HCT116 (cell line): ENCODE measurements at regions of chr9 and their contacts with region 1.

Region 1: DNA sequence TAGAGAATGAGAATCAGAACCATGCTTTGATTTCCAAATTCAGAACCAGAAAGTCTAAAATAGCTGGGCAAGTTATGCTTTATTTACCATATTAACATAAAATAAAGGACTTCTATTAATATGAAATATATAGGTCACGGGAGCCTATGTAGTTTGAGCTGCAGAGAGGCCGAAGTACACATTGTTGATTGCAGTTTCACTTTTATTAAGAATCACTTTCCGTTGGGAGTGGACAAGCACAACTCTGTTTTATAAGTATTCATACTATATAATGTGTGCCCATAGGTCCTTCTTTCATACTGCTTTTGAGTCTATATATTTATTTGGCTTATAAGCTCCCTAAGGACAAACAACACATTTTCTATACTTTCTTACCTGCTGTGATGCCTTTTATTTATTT is 58.7 kb upstream of the DMRT3 start:
- DNase-seq: no peak
- ATAC-seq: no peak
- H3K4me3 ChIP-seq: no peak overlapping the region
- H3K27ac ChIP-seq: no peak overlapping the region
- H3K4me1 ChIP-seq: no peaks in the 10 kb centered on the region
- H3K27me3 ChIP-seq: peaks cover 4% of the 10 kb centered on the region; the same call in 1 of the 2 replicates
- CTCF ChIP-seq: no peak
- POLR2A ChIP-seq: no peak
- RAD21 ChIP-seq: no peak

Region 2: GRCh38 chr9:928362-929042 is 10.8 kb after region 1 on chr9:
- CTCF ChIA-PET with region 1: interaction called, 15 read pairs
- POLR2A ChIA-PET with region 1: no interaction called
- RAD21 ChIA-PET with region 1: no interaction called
- intact Hi-C with region 1: no loop called
- DNase-seq: peak; percentile 37
- ATAC-seq: peak; percentile 85
- H3K4me3 ChIP-seq: no peak overlapping the region
- H3K27ac ChIP-seq: no peak overlapping the region
- H3K4me1 ChIP-seq: no peaks in the 10 kb centered on the region
- H3K27me3 ChIP-seq: 0 out of 2 replicates have a peak, but pooled peaks cover 4% of the 10 kb centered on the region
- CTCF ChIP-seq: peak in 2 of 3 experiments; percentile 69 to 80; a peak in 4 of 6 replicates
- POLR2A ChIP-seq: no peak
- RAD21 ChIP-seq: no peak